AG04450 (cell line): ENCODE measurements at regions of chr7 and their contacts with region 1.

Region 1: GRCh38 chr7:23712368-23713284 is 2.6 kb downstream of the STK31 start:
- DNase-seq: peak; percentile 29
- H3K4me3 ChIP-seq: no peak overlapping the region
- H3K27ac ChIP-seq: no peak overlapping the region
- H3K27me3 ChIP-seq: no peaks in the 10 kb centered on the region
- CTCF ChIP-seq: peak; percentile 57

Region 2: DNA sequence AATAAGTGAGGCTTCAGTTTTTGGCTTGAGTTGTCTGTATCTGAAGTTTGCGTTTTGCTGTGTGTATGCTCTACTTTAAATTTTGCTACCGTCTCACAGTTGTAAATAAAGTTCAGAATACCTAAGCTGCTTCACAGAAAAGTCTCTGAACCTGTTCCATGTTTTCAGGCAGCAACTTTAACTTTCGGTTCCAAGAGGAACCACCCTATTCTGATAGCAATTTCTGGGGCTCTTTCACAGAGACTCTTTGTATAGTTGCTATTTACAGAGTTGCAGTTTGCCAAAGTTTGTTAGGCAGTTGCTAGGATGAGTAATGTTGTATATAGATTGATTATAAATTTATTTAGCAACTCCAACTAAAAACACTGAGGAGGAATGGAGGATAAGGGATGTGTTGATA is 26.9 kb before region 1 on chr7:
- CTCF ChIA-PET with region 1: interaction called, 12 read pairs
- POLR2A ChIA-PET with region 1: no interaction called
- DNase-seq: no peak
- H3K4me3 ChIP-seq: no peak overlapping the region
- H3K27ac ChIP-seq: no peak overlapping the region
- H3K27me3 ChIP-seq: no peaks in the 10 kb centered on the region
- CTCF ChIP-seq: no peak

Region 3: GRCh38 chr7:24036042-24036412 is 323.4 kb after region 1 on chr7:
- CTCF ChIA-PET with region 1: no interaction called
- POLR2A ChIA-PET with region 1: no interaction called
- DNase-seq: no peak
- H3K4me3 ChIP-seq: no peak overlapping the region
- H3K27ac ChIP-seq: no peak overlapping the region
- H3K27me3 ChIP-seq: no peaks in the 10 kb centered on the region
- CTCF ChIP-seq: no peak